ENCODE measurements at regions of chr6 and their contacts with region 1.

Region 1: GRCh38 chr6:30483677-30484279 is 5.5 kb upstream of the HLA-E start:
- DNase-seq: peak; percentile 75
- H3K4me3 Mint-ChIP-seq: no peak overlapping the region
- H3K27ac Mint-ChIP-seq: no peak overlapping the region
- H3K4me1 Mint-ChIP-seq: peaks cover 3% of the 10 kb centered on the region
- H3K27me3 Mint-ChIP-seq: peaks cover 43% of the 10 kb centered on the region
- CTCF ChIP-seq: peak; percentile 70

Region 2: DNA sequence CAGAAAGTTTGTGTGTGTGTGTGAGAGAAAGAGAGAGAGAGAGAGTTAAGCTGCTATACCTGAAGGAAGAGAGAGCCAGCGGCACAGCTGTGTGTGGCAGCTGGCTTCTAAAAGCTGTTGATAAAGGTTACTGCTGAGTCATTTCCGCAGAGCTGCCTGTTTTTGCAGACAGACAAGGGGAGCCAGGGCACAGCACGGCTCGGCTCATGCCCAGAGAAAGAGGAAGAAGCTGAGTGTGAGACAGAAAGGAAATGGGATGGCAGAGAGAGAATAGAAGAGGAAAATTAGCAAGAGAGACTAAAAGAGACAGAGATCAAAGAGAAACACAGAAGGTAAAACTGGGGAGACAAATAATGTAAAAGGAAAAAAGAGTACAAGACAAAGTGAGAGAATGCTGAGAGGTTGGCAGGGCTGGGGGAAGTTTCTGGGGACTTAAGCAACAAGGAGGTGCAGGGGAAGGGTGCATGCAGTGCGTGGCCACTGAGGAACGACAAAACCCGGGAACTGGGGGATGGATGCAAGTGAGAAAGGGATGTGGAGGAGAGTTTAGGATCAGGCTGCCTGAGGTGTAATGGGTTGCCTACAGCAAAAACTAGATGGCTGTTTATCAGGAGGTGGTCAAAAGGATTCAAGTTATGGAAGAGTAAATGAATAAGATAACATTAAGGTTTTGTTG is 518.8 kb before region 1 on chr6:
- CTCF ChIA-PET with region 1: no interaction called
- POLR2A ChIA-PET with region 1: no interaction called
- intact Hi-C with region 1: no loop called
- DNase-seq: peak; percentile 88
- H3K4me3 Mint-ChIP-seq: peak overlapping the region; percentile 67
- H3K27ac Mint-ChIP-seq: peak overlapping the region; percentile 73
- H3K4me1 Mint-ChIP-seq: peaks cover 35% of the 10 kb centered on the region
- H3K27me3 Mint-ChIP-seq: no peaks in the 10 kb centered on the region
- CTCF ChIP-seq: no peak

Region 3: GRCh38 chr6:30465595-30466306 is 18.0 kb before region 1 on chr6:
- CTCF ChIA-PET with region 1: interaction called, 17 read pairs
- POLR2A ChIA-PET with region 1: interaction called, 4 read pairs
- intact Hi-C with region 1: no loop called
- DNase-seq: no peak
- H3K4me3 Mint-ChIP-seq: peak overlapping the region; percentile 81
- H3K27ac Mint-ChIP-seq: no peak overlapping the region
- H3K4me1 Mint-ChIP-seq: no peaks in the 10 kb centered on the region
- H3K27me3 Mint-ChIP-seq: peaks cover 98% of the 10 kb centered on the region
- CTCF ChIP-seq: no peak

Region 4: DNA sequence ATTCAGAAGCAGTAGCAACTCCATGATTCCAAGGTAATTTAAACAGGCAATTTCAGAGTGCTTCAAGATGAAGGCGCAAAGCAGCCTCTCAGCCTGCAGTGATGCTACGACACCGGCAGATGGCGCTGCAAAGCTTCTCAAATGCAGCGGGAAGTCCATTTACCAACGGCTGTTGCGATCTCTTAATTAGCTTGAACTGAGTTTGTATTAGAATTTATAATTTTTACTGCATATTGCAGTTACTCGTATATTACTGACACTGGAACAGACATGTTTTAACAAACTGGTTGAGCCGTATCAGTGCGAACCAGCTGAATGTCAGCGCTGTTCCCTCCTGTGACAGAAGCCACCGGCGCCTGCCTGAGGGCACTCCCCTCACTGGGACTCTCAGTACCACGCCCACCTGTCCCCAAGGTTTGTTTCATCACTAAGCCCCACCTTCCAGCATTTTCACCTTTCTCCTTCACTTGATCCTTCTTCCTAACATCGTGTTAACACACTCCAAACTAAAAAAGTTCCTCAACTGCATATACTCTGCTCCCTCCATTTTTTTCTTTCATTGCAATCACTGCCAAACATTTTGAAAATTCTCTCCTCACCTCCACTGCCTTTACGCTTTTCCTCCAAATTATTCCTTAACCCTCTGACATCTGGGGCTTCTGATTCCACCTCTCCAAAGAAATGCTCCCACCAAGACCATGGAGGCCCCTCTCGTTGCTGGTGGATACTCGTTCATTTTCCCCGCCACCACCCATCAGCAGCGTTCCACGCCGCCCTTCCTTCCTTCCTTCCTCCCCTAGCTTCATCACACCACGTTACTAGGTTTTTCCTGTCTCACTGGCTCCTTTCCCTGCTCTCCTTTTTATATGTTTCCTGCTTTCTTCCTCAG is 58.0 kb after region 1 on chr6:
- CTCF ChIA-PET with region 1: interaction called, 229 read pairs
- POLR2A ChIA-PET with region 1: interaction called, 12 read pairs
- intact Hi-C with region 1: loop called (anchors 1 kb)
- DNase-seq: peak; percentile 74
- H3K4me3 Mint-ChIP-seq: peak overlapping the region; percentile 15
- H3K27ac Mint-ChIP-seq: no peak overlapping the region
- H3K4me1 Mint-ChIP-seq: peaks cover 12% of the 10 kb centered on the region
- H3K27me3 Mint-ChIP-seq: no peaks in the 10 kb centered on the region
- CTCF ChIP-seq: peak; percentile 92

Region 5: GRCh38 chr6:30600451-30600961 is 116.7 kb after region 1 on chr6:
- CTCF ChIA-PET with region 1: interaction called, 20 read pairs
- POLR2A ChIA-PET with region 1: interaction called, 5 read pairs
- intact Hi-C with region 1: loop called (anchors 1 kb)
- DNase-seq: peak; percentile 20
- H3K4me3 Mint-ChIP-seq: no peak overlapping the region
- H3K27ac Mint-ChIP-seq: no peak overlapping the region
- H3K4me1 Mint-ChIP-seq: no peaks in the 10 kb centered on the region
- H3K27me3 Mint-ChIP-seq: no peaks in the 10 kb centered on the region
- CTCF ChIP-seq: no peak

Region 6: DNA sequence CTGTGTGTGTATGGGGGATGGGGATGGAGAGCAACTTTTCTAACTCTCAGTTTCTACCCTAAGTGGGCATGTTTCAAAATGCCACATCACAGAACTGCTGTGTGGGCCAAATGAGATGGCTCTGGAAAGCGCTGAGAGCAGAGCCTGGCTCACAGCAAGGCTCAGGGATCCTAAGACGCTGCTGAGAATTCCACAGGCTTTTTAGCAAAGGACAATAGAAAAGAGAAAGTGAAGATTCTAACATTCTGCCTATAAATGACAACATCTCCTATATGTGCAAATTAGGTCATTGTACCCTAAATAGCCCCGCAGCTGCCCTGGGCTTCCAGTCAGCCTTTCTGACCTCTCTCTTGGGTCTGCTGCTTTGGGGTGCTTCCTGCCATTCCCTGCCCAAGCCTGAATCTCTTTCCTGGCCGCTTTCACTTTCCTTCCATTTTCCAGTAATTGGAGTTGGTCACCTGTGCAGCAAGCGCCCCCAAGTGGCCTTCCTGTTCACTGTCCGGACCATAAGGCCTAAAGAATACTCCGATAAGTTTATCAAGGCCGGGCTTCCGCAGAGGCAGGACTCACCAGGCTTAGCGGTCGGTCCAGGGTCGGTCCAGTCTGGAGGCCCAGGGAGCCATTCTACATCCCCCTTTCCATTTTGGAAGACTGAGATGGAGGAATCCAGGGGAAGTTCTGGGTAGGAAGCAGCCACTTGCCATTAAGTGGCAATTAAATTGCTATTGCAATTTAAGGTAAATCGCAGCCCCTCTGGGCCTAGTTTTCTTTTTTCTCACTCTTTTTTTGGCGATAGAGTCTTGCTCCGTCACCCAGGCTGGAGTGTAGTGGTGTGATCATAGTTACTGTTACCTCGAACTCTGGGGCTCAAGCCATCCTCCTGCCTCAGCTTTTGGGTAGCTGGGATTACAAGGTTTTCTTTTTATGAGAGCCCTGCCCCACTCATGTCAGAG is 393.9 kb after region 1 on chr6:
- CTCF ChIA-PET with region 1: no interaction called
- POLR2A ChIA-PET with region 1: no interaction called
- intact Hi-C with region 1: loop called (anchors 2 kb)
- DNase-seq: peak; percentile 93
- H3K4me3 Mint-ChIP-seq: peak overlapping the region; percentile 61
- H3K27ac Mint-ChIP-seq: peak overlapping the region; percentile 95
- H3K4me1 Mint-ChIP-seq: peaks cover 40% of the 10 kb centered on the region
- H3K27me3 Mint-ChIP-seq: no peaks in the 10 kb centered on the region
- CTCF ChIP-seq: peak; percentile 90

Measured in MCF 10A (cell line).